Activated CD4-positive, alpha-beta memory T cell treated with anti-CD3 and anti-CD28 coated beads for 36 hours (primary cell): ENCODE measurements at regions of chr15 and their contacts with region 1.

Region 1: DNA sequence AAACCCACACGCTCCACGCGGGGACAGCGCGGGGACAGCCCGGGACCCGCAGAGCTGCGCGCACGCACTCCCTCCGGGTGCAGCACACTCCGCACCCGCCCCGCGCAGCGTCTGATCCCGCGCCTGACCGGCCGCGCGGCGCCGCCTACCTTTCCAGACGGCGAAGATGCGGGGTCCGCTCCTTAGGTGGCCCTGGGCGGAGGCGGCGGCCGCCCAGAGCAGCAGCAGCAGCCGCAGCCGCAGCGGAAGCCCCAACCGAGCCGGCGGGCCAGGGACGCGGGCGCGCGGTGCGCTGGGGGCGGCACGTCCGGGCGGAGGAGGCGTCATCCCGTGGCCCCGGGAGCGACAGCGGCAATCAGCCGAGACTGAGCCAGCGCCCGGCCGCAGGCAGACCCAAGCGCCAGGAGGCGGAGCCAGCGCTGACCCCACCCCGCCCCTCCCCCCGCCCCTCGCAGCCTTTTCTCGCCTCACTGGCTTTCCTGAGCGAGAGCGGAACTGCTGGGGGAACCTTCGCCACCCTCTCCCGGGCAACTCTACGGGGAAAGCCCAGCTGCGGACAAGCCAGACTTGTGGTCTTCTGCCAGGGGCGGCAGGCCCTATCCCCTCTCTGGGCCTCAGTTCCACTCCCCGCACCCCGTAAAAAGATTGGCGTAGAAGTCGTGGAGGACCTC is at the start of gene SEMA7A:
- DNase-seq: peak; percentile 90
- H3K4me3 Mint-ChIP-seq: peak within 1 kb of the TSS; percentile 86
- H3K27ac Mint-ChIP-seq: peak within 1 kb of the TSS; percentile 89
- H3K4me1 Mint-ChIP-seq: peaks cover 58% of the 10 kb centered on the region
- H3K27me3 Mint-ChIP-seq: no peaks in the 10 kb centered on the region
- total RNA-seq, gene SEMA7A: 65.9 to 68.4 TPM

Region 2: DNA sequence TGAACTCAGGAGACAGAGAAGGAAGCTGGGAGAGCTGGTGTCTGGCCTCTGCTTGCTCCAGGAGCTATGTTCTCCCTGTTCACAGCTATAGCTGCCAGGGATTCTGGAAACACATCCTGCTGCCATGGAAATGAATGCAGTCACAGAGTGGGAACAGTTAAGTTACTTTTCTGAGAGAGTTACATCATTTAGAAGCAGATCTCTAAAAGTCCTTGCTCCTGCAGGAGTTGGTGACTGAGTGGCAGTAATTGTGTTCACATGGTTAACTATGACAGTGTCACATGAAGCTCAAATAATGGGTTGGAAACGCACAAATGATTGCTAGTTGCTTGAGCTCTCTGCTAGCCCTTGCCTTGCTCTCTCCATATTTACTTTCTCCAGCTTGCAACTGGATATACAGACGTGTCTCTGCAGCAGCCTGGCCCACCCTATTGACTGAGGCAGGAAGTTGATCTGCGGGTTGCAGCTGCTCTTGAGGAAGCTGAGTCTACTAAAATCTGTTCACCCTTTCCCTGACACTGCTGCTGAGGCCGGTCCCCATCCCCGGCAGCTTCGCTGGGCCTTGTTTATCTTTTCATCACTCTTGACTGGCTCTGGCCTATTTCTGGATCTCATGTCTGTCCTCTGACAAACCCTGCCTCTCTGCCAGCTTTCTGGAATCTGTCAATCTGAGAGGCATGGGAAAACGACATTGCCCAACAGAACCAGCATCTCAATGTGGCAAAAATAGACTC is 276.9 kb before region 1 on chr15:
- CTCF ChIA-PET with region 1: no interaction called
- POLR2A ChIA-PET with region 1: no interaction called
- intact Hi-C with region 1: no loop called
- DNase-seq: no peak
- H3K4me3 Mint-ChIP-seq: no peak overlapping the region
- H3K27ac Mint-ChIP-seq: no peak overlapping the region
- H3K4me1 Mint-ChIP-seq: peaks cover 19% of the 10 kb centered on the region
- H3K27me3 Mint-ChIP-seq: peaks cover 20% of the 10 kb centered on the region

Region 3: GRCh38 chr15:74402873-74403587 is 30.7 kb before region 1 on chr15:
- CTCF ChIA-PET with region 1: interaction called, 14 read pairs
- POLR2A ChIA-PET with region 1: interaction called, 24 read pairs
- intact Hi-C with region 1: loop called (anchors 1 kb)
- DNase-seq: peak; percentile 95
- H3K4me3 Mint-ChIP-seq: peak overlapping the region; percentile 28
- H3K27ac Mint-ChIP-seq: peak overlapping the region; percentile 85
- H3K4me1 Mint-ChIP-seq: peaks cover 73% of the 10 kb centered on the region
- H3K27me3 Mint-ChIP-seq: no peaks in the 10 kb centered on the region